MCF 10A (cell line): ENCODE measurements at regions of chr6 and their contacts with region 1.

Region 1: DNA sequence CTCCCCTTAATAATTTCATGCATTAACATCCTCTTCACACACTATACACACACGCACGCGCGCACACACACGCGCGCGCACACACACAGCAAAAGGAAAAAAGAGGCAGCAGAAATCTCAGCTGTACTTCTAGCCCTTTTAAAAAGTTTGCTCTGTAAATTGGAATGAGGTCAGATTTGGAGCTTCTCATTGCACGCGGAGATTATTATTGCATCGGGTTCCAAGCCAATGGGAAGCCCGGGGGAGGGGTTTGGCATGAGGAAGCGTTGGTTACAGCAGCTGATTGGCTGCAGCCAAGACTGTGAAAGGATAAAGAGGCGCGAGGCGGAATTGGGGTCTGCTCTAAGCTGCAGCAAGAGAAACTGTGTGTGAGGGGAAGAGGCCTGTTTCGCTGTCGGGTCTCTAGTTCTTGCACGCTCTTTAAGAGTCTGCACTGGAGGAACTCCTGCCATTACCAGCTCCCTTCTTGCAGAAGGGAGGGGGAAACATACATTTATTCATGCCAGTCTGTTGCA is at the start of gene SOX4:
- DNase-seq: peak; percentile 97
- H3K4me3 Mint-ChIP-seq: no peak within 1 kb of the TSS
- H3K27ac Mint-ChIP-seq: no peak within 1 kb of the TSS
- H3K4me1 Mint-ChIP-seq: no peaks in the 10 kb centered on the region
- H3K27me3 Mint-ChIP-seq: no peaks in the 10 kb centered on the region
- CTCF ChIP-seq: no peak
- total RNA-seq, gene SOX4: 12.8 and 12.9 TPM in 2 replicates

Region 2: GRCh38 chr6:20564269-20564668 is 1029.2 kb before region 1 on chr6:
- CTCF ChIA-PET with region 1: interaction called, 56 read pairs
- POLR2A ChIA-PET with region 1: interaction called, 26 read pairs
- intact Hi-C with region 1: loop called (anchors 1 kb)
- DNase-seq: peak; percentile 17
- H3K4me3 Mint-ChIP-seq: no peak overlapping the region
- H3K27ac Mint-ChIP-seq: no peak overlapping the region
- H3K4me1 Mint-ChIP-seq: peaks cover 14% of the 10 kb centered on the region
- H3K27me3 Mint-ChIP-seq: no peaks in the 10 kb centered on the region
- CTCF ChIP-seq: peak; percentile 34

Region 3: DNA sequence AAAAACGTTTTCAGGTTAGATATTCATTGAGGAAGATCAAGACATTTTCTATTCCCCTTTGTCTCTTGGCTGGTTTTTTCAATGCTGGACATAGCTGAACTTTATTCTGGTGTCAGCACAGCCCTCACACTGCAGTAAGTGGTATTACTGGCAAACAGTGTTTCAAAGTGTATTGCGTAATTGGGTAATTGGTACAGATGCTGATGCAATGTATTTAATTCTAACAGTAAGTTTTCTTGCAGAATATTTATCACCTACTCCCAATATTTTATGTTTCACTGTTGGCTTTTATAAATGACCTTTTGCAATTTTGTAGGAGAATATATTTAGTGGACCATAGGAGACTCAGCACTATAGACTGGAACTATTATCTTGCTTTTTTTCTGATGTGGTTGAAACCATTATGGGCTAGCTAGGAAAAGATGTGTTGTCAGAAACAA is 287.6 kb before region 1 on chr6:
- CTCF ChIA-PET with region 1: no interaction called
- POLR2A ChIA-PET with region 1: interaction called, 3 read pairs
- intact Hi-C with region 1: loop called (anchors 10 kb)
- DNase-seq: peak; percentile 75
- H3K4me3 Mint-ChIP-seq: no peak overlapping the region
- H3K27ac Mint-ChIP-seq: no peak overlapping the region
- H3K4me1 Mint-ChIP-seq: no peaks in the 10 kb centered on the region
- H3K27me3 Mint-ChIP-seq: no peaks in the 10 kb centered on the region
- CTCF ChIP-seq: no peak

Region 4: DNA sequence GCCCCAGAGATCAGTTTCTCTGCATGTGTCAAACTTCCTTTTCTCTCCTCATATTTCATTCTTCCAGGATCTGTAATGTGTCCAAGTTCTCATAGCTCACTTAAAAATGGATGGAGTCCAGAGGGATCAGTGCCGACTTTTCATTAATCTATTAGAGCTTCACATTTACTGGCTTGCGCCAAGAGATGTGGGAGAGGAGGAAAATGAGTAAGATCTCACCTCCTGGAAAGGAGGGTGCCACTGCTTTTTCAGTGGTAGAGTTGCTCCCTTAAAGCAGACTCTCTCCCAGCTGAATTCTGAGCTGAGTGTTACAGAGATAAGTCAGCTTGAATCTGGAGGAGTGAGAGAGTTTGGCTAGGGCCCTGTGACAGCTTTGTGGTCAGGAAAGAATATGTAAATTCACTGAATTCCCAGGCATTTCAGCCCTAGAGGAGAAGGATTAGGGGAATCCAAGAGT is 176.0 kb after region 1 on chr6:
- CTCF ChIA-PET with region 1: no interaction called
- POLR2A ChIA-PET with region 1: no interaction called
- intact Hi-C with region 1: loop called (anchors 5 kb)
- DNase-seq: peak; percentile 78
- H3K4me3 Mint-ChIP-seq: peak overlapping the region; percentile 4
- H3K27ac Mint-ChIP-seq: peak overlapping the region; percentile 53
- H3K4me1 Mint-ChIP-seq: peaks cover 23% of the 10 kb centered on the region
- H3K27me3 Mint-ChIP-seq: no peaks in the 10 kb centered on the region
- CTCF ChIP-seq: no peak

Region 5: DNA sequence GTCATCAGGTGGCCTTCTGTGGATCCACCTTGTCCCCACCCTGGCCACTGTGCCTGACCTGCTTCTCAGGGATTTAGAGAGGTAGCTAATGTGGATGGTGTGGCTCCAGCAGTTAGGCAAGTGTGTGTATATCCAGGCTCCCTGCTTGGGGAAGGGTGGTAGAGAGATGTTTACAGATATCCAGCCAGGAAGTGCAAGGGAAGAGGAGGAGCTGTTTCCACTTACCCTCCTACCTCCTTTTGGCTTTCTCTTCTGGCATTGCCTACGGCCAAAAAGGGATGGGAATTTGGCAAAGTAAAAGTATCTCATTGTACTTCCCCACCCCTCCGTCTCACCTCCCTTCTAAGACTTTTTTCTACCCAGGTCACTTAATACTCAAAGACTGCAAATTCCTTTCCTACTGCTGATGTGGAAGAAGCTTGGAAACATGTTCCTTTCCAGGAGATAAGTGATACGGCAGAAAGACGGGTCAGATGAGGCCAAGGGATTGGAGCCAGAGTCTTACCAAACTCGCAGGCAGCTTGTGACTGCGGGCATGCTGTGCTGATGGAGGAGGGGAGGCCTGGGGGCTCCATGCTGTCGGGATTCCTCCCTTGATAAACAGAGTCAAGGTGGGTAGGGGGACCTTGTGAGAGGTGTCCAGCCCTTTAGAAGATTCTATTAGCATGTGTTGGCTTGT is 450.0 kb after region 1 on chr6:
- CTCF ChIA-PET with region 1: interaction called, 5 read pairs
- POLR2A ChIA-PET with region 1: no interaction called
- intact Hi-C with region 1: loop called (anchors 10 kb)
- DNase-seq: peak; percentile 35
- H3K4me3 Mint-ChIP-seq: peak overlapping the region; percentile 73
- H3K27ac Mint-ChIP-seq: peak overlapping the region; percentile 88
- H3K4me1 Mint-ChIP-seq: peaks cover 10% of the 10 kb centered on the region
- H3K27me3 Mint-ChIP-seq: no peaks in the 10 kb centered on the region
- CTCF ChIP-seq: no peak

Region 6: DNA sequence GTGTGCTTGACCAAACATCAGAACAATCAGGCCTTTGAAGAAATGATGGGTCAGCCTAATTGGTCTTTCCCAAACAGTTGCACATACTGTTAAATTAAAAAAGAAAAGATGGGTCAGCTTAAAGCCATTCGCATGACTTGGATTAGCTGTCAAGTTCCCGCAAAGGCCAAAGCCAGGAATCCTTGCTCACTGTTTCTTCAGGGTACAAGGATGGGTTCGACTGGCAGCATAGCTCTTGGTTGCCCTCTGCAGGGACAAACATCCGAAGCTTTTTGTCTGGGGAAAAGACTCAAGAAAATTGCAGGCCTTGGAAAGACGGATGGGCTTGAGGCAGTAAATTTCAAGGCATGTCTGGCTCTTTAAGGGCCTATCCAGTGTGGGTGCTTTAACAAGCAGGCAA is 1143.9 kb after region 1 on chr6:
- CTCF ChIA-PET with region 1: no interaction called
- POLR2A ChIA-PET with region 1: no interaction called
- intact Hi-C with region 1: loop called (anchors 5 kb)
- DNase-seq: peak; percentile 33
- H3K4me3 Mint-ChIP-seq: no peak overlapping the region
- H3K27ac Mint-ChIP-seq: no peak overlapping the region
- H3K4me1 Mint-ChIP-seq: peaks cover 5% of the 10 kb centered on the region
- H3K27me3 Mint-ChIP-seq: no peaks in the 10 kb centered on the region
- CTCF ChIP-seq: peak; percentile 31

Region 7: GRCh38 chr6:23446394-23447046 is 1853.1 kb after region 1 on chr6:
- CTCF ChIA-PET with region 1: interaction called, 5 read pairs
- POLR2A ChIA-PET with region 1: no interaction called
- intact Hi-C with region 1: loop called (anchors 2 kb)
- DNase-seq: peak; percentile 47
- H3K4me3 Mint-ChIP-seq: no peak overlapping the region
- H3K27ac Mint-ChIP-seq: no peak overlapping the region
- H3K4me1 Mint-ChIP-seq: no peaks in the 10 kb centered on the region
- H3K27me3 Mint-ChIP-seq: no peaks in the 10 kb centered on the region
- CTCF ChIP-seq: peak; percentile 41